ENCODE measurements at regions of chr2 and their contacts with region 1.

Region 1: GRCh38 chr2:24490674-24491625 is at the start of gene NCOA1:
- DNase-seq: peak; percentile 92
- ATAC-seq: peak; percentile 91 to 95
- total RNA-seq, gene NCOA1: 34.3 to 35.2 TPM

Region 2: GRCh38 chr2:24429197-24430074 is 61.5 kb before region 1 on chr2:
- intact Hi-C with region 1: no loop called
- DNase-seq: no peak
- ATAC-seq: no peak

Region 3: DNA sequence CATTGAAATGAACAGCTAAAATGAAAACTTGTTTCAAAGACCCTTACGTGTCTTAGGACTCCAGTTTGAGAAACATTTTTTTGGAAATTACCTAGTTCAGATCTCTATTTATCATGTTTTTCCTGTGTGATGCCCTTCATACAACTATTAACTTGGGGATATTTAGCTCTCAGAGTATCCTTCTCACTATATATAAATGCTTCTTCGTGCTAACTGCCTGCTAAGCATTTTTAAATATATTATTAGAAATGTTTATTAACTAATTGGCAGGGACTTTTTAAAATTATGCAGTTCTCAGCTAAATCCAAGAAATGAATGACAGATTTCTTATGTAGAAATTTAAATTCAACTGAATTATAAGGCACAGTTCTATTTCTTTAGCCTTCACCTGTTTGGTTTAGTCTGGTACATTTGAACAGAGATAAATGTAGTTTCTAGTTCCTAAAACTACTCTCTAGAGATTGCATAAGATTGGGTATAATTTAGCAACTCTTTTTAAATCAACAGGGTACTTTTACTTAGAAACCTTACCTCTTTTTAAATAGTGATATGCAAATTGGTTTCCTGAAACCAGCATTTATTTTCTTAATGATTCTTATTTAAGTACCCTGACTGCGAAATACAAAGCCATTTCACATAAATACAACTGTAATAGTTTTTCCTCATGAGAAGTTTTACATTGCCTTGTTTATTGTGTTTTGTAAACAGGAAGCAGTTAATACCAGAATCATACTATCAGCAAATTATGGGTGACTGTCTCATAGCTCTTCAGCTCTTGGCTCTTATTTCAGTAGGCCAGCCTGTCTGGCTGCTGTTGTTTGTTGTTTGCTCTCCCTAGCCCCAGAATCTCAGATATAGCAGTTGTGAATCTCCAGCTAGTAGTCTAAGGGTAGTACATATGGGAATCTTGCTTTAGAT is 161.6 kb after region 1 on chr2:
- intact Hi-C with region 1: loop called in 1 of 2 experiments (anchors 10 kb)
- DNase-seq: no peak
- ATAC-seq: no peak

Region 4: DNA sequence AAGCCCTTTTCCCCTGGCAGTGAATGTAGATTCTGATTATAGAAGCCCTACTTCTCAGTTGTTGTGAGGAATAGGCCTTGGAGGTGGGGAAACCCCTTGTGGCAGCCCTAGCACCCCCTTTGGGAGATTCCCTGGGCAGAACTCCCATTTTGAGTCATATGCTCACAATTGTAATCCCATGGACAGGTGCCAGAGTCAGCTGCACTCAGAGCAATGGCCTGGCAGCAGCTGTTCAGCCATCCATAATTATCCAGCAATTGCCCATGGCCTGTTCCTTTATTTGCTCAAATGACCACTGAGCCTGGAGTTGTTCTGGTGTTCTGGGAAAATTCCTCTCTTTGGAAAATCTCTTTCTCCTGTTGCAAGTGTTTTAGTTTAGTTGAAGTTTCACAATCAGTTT is 230.5 kb after region 1 on chr2:
- intact Hi-C with region 1: loop called in 1 of 2 experiments (anchors 10 kb)
- DNase-seq: peak; percentile 79
- ATAC-seq: peak; percentile 94 to 98

Region 5: DNA sequence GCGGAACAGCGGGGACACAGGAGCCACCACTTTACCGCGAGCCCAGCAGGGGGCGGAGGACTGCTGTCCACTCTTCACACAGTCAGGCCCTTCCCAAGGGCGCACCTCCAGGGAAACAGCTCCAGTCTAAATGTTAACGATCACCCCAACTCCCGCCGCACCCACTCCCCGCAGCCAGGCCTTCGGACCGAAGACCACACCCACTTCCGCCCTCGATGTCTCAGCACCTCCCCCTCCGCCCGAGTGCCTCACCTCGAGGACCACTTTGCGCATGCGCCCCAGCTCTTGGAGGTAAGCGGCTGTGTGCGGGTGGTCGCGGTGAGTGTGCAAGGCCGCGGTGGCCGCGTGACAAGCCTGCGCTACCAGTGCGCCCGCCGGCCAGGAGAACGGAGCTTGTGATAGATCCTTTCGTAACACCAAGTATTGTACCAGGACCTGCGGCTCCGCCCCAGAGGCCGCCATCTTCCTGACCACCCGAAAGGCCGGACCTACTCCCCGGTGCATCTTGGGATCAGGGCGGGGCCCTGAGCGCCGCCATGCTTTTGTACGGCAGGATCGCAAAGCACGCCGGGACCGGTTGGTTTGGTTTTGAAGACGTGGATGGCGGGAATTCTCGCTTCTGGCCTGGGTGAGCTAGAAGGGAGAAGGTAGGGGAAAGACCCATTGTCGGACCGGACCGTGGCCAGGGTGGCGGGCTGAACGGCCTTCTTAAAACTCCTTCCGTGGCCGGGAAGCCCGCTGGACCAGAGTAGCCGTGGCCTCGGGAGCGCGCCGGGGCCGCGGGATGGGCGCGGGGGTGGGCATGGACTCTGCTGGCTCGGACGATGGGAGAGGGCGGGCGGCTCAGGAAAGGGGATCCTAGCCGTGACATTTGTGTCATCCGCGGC is 302.2 kb after region 1 on chr2 and contains the starts of genes CENPO and PTRHD1:
- intact Hi-C with region 1: loop called in 1 of 2 experiments (anchors 10 kb)
- DNase-seq: peak; percentile 98
- ATAC-seq: peak; percentile 99
- total RNA-seq, gene CENPO: 3.0 to 4.2 TPM
- total RNA-seq, gene PTRHD1: 19.8 to 24.3 TPM

Region 6: DNA sequence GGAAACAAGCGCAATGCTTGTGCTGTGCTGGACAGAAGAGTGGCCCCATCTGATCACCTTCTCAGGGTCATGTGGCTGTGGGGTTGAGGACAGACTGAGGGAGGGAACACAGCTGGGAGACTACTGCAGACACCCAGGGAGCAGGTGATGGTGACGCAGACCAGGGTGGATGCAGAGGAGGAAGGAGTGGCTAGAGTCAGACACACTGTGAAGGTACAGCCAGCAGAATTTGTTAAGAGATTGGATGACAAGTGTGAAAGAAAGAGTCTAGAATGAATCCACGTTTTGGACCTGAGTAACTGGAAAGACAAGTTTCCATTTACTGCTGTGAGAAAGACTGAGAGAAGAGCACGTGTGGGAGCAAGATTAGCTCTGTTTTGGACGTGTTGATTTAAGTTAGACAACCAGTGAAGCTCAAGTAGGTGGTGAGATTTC is 693.3 kb after region 1 on chr2:
- intact Hi-C with region 1: no loop called
- DNase-seq: no peak
- ATAC-seq: no peak